Posterior vena cava (tissue), 2 donors: ENCODE measurements at regions of chr19 and their contacts with region 1.

Region 1: DNA sequence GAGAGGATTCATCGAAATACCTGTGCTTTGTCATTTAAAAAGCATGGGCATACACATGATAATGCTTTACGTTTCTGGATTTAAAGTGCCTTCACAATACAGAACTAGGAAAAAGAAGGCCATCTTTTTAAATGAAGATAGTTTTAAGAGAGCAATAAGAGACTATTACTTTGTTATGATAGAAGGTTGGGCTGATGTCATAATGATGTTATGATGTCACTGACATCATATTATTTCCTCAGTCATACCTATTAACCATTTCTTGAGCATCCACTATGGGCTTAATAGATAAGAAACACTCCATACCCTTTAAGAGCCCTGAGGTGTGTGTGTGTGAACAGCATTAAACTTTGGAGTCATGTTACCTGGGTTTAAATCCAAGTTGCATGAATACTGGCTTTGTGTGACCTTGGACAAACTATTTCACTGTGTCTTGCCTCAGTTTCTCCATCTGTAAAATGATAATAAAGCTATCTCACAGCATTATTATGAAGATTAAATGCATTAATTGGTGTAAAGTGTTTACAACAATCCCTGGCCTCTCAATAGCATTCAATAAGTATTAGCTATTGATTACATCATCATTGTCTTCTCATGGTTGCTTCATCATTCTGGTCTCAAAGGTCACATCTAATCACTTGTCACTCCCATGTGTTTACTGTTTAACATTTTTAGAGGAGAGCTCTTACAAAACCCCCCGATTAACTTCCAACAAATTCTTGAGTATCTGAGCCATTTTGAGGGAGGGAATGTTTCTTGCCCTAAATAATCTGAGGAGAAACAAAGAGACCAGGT is 11.1 kb downstream of the ZNF181 start:
- DNase-seq: no peak

Region 2: DNA sequence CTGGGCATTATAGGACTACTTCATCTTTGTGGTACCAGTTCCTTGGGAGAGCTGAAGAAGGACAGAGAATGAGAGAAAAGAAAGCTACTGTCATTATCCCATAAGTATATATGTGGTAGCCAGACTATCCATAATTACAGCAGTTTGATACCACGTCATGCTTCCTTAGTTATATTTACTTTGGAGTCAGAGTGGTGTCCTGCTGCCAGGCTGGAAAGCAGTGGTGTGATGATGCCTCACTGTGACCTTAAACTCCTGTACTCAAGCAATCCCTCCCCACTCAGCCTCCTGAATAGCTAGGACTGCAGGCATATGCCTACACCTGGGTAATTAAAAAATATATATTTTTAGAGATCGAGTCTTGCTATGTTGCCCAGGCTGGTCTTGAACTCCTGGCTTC is 205.7 kb before region 1 on chr19:
- intact Hi-C with region 1: loop called in 1 of 2 experiments (anchors 5 kb)
- DNase-seq: no peak